CD4-positive, alpha-beta memory T cell (primary cell): ENCODE measurements at regions of chr12 and their contacts with region 1.

Region 1: DNA sequence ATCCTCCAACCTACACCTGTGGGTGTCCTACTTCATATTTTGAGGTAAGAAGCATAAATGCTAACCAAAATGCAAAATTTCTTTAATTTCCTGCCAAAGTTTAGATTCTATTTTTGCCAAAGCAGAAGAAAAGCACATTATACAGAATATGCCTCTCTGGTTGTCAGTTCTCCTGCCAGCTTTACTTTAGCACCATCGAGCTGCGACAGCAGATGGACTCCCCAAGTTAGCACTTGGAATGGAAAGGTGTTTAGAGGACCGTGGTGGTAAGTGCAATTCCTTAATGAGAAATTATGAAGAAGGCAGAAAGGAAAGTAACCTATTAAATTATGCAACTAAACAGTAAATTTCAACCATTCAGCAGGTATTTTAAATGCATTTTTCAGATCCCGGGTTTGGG is 326.6 kb downstream of the RERGL start:
- DNase-seq: no peak
- H3K4me3 ChIP-seq: no peak overlapping the region
- H3K4me3 Mint-ChIP-seq: no peak overlapping the region
- H3K27ac ChIP-seq: no peak overlapping the region
- H3K27ac Mint-ChIP-seq: no peak overlapping the region
- H3K4me1 ChIP-seq: no peaks in the 10 kb centered on the region
- H3K4me1 Mint-ChIP-seq: no peaks in the 10 kb centered on the region
- H3K27me3 ChIP-seq: no peaks in the 10 kb centered on the region
- H3K27me3 Mint-ChIP-seq: no peaks in the 10 kb centered on the region

Region 2: DNA sequence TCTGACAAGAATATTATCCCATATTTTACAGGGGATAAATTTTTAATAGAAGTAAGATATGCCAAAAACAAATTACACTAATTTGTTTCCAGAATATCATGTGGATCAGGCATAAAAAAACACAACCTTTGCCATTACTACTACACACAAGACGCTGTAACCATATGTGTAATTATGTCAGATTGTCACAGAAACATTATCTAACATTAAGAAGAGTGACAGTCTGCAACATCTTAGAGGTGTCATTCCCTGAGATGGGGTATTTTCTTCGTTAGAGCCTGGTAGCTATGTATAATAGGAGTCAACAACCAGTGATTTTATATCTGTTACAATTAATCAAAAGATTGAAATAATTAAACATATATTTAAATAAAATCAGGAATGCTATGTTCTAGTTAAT is 192.3 kb before region 1 on chr12:
- CTCF ChIA-PET with region 1: no interaction called
- POLR2A ChIA-PET with region 1: no interaction called
- intact Hi-C with region 1: no loop called
- DNase-seq: no peak
- H3K4me3 ChIP-seq: no peak overlapping the region
- H3K4me3 Mint-ChIP-seq: no peak overlapping the region
- H3K27ac ChIP-seq: no peak overlapping the region
- H3K27ac Mint-ChIP-seq: no peak overlapping the region
- H3K4me1 ChIP-seq: no peaks in the 10 kb centered on the region
- H3K4me1 Mint-ChIP-seq: no peaks in the 10 kb centered on the region
- H3K27me3 ChIP-seq: no peaks in the 10 kb centered on the region
- H3K27me3 Mint-ChIP-seq: no peaks in the 10 kb centered on the region

Region 3: GRCh38 chr12:17841496-17841895 is 78.1 kb after region 1 on chr12:
- CTCF ChIA-PET with region 1: no interaction called
- POLR2A ChIA-PET with region 1: no interaction called
- intact Hi-C with region 1: loop called (anchors 10 kb)
- DNase-seq: no peak
- H3K4me3 ChIP-seq: no peak overlapping the region
- H3K4me3 Mint-ChIP-seq: no peak overlapping the region
- H3K27ac ChIP-seq: no peak overlapping the region
- H3K27ac Mint-ChIP-seq: no peak overlapping the region
- H3K4me1 ChIP-seq: no peaks in the 10 kb centered on the region
- H3K4me1 Mint-ChIP-seq: no peaks in the 10 kb centered on the region
- H3K27me3 ChIP-seq: no peaks in the 10 kb centered on the region
- H3K27me3 Mint-ChIP-seq: no peaks in the 10 kb centered on the region